ENCODE measurements at regions of chr6 and their contacts with region 1.

Region 1: DNA sequence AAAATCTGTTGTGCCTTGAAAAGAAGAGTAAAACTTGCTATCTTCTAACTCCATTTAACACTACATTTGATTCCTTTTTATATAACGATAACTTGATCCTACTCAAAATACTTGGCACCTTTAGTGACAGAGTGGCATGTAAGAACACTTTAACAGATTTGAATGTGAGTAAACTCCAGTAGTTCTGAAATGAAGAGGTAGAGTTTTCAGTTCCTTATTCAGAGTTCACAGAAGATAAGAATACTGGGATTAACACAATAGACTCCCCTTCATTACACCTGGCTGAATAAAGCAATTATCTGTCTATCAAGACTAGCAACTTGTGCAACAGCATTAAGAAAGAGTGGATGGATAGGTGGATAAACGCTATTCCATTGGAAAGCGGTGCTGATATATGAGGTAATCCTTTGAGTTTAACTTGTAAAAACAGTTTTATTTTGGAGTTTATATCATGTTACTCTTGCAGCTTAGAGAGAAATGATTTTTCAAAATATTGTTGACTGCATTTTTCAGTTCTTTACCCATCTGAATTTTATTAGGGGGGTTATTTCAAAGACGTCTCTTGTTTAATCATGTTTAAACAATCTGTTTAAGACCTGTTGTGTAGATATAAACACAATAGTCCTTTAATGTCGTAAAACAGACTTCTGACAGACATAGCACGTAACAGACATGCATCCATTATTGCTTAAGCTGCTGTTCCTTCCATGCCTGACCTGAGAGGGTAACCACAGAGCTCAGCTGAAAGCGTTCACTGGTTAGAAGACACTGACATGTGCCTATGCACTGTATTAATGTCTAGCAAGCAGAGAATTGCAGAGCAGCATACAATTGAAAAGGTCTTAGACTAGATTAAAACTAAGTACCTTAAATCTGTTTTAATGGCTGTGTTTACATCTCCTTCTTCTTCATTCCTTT is 102.4 kb upstream of the SUPT3H start:
- DNase-seq: no peak
- H3K4me3 ChIP-seq: no peak overlapping the region
- H3K27ac ChIP-seq: no peak overlapping the region
- H3K4me1 ChIP-seq: peaks cover 36% of the 10 kb centered on the region
- H3K27me3 ChIP-seq: no peaks in the 10 kb centered on the region
- CTCF ChIP-seq: no peak

Region 2: GRCh38 chr6:45416700-45417099 is 63.4 kb before region 1 on chr6:
- CTCF ChIA-PET with region 1: no interaction called
- POLR2A ChIA-PET with region 1: interaction called, 11 read pairs
- intact Hi-C with region 1: no loop called
- DNase-seq: no peak
- H3K4me3 ChIP-seq: no peak overlapping the region
- H3K27ac ChIP-seq: no peak overlapping the region
- H3K4me1 ChIP-seq: peaks cover 18% of the 10 kb centered on the region
- H3K27me3 ChIP-seq: no peaks in the 10 kb centered on the region
- CTCF ChIP-seq: no peak

Measured in PC-9 (cell line).